CD14-positive monocyte (primary cell): ENCODE measurements at regions of chr17 and their contacts with region 1.

Region 1: GRCh38 chr17:4872786-4873185 is 26.6 kb upstream of the C17orf107 start:
- DNase-seq: peak in 1 of 3 donors; percentile 47
- H3K4me3 ChIP-seq: no peak overlapping the region
- H3K4me3 Mint-ChIP-seq: peak overlapping the region in 1 of 2 donors; percentile 64
- H3K27ac ChIP-seq: peak overlapping the region in 1 of 2 donors; percentile 27
- H3K27ac Mint-ChIP-seq: peak overlapping the region; percentile 26 to 85 (median 68)
- H3K4me1 ChIP-seq: peaks cover 46 to 49% of the 10 kb centered on the region in 2 donors
- H3K4me1 Mint-ChIP-seq: peaks cover 38% of the 10 kb centered on the region
- H3K27me3 ChIP-seq: no peaks in the 10 kb centered on the region
- H3K27me3 Mint-ChIP-seq: no peaks in the 10 kb centered on the region
- CTCF ChIP-seq: no peak

Region 2: DNA sequence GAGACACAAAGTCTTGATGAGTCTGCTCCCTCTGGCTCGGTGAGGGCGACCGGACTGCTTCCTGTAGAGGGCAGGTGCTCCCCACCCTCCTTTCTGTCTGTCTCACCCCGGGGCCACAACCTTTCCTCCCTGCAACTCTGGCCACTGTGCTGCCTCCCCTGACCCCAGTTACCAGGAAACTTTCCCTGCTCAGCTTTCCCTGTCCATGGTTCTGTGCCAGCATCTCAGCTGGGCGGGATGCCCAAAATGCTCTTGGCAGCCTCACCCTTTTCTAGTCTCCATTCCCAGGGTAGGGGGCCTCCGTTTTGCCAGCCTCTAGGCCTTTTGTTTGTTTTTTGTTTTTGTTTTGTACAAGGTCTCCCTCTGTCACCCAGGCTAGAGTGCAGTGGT is 64.4 kb before region 1 on chr17:
- intact Hi-C with region 1: no loop called
- DNase-seq: no peak
- H3K4me3 ChIP-seq: peak overlapping the region in 1 of 3 experiments; percentile 81
- H3K4me3 Mint-ChIP-seq: peak overlapping the region; percentile 86 to 90
- H3K27ac ChIP-seq: no peak overlapping the region
- H3K27ac Mint-ChIP-seq: peak overlapping the region in 3 of 7 donors; percentile 26 to 59 (median 46)
- H3K4me1 ChIP-seq: peaks cover 10 to 11% of the 10 kb centered on the region in 2 donors
- H3K4me1 Mint-ChIP-seq: peaks cover 24% of the 10 kb centered on the region
- H3K27me3 ChIP-seq: peaks cover 3 to 28% of the 10 kb centered on the region in 2 donors
- H3K27me3 Mint-ChIP-seq: peaks cover 33 to 44% (median 44%) of the 10 kb centered on the region in 3 donors
- CTCF ChIP-seq: no peak

Region 3: DNA sequence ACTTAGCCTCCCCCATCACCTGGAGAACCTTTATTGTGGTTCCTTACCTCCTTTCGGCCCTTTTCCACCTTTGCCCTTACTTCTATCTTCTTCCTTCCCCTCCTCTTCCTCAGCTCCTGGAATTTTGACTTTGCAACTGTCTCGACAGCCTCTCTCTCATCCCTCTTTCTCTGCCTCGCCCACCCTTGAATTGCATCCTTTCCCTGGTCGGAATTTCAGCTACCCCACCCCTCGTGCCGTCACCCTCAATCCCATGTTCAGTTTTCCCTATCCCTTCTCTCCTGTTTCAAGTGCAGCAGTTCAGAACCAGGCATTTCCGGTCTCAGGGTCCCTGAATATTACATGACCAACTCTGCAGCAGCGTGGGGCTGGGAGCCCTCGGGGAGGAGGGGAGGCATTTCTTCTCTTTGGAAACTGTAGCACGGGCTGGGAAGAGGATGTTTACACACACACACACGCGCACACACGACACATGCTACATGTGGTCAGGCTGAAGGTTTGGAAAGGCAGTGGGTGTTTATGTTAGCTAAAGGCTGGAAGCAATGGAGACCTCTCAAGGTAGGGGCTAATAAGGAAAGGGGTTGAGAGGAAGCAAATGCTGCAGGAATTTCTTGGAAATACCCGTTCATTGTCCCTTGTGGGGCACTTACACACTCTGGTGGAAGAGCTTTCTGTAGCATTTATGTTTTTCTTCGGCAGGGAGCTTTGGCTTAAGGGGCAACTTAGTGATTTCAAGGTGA is 38.7 kb before region 1 on chr17:
- intact Hi-C with region 1: loop called (anchors 5 kb)
- DNase-seq: peak in 1 of 3 donors; percentile 21
- H3K4me3 ChIP-seq: peak overlapping the region; percentile 78 to 95 (median 94)
- H3K4me3 Mint-ChIP-seq: peak overlapping the region; percentile 97 to 99
- H3K27ac ChIP-seq: peak overlapping the region; percentile 38 to 88
- H3K27ac Mint-ChIP-seq: peak overlapping the region; percentile 70 to 94 (median 88)
- H3K4me1 ChIP-seq: peaks cover 25 to 32% of the 10 kb centered on the region in 2 donors
- H3K4me1 Mint-ChIP-seq: peaks cover 35% of the 10 kb centered on the region
- H3K27me3 ChIP-seq: no peaks in the 10 kb centered on the region
- H3K27me3 Mint-ChIP-seq: peaks cover 5 to 6% (median 5%) of the 10 kb centered on the region in 3 donors
- CTCF ChIP-seq: no peak

Region 4: GRCh38 chr17:5304636-5305035 is 431.9 kb after region 1 on chr17:
- intact Hi-C with region 1: no loop called
- DNase-seq: no peak
- H3K4me3 ChIP-seq: no peak overlapping the region
- H3K4me3 Mint-ChIP-seq: no peak overlapping the region
- H3K27ac ChIP-seq: no peak overlapping the region
- H3K27ac Mint-ChIP-seq: peak overlapping the region in 2 of 7 donors; percentile 26 to 72
- H3K4me1 ChIP-seq: peaks cover 7 to 12% of the 10 kb centered on the region in 2 donors
- H3K4me1 Mint-ChIP-seq: peaks cover 33% of the 10 kb centered on the region
- H3K27me3 ChIP-seq: no peaks in the 10 kb centered on the region
- H3K27me3 Mint-ChIP-seq: no peaks in the 10 kb centered on the region
- CTCF ChIP-seq: no peak